AG04449 (cell line): ENCODE measurements at regions of chr2 and their contacts with region 1.

Region 1: DNA sequence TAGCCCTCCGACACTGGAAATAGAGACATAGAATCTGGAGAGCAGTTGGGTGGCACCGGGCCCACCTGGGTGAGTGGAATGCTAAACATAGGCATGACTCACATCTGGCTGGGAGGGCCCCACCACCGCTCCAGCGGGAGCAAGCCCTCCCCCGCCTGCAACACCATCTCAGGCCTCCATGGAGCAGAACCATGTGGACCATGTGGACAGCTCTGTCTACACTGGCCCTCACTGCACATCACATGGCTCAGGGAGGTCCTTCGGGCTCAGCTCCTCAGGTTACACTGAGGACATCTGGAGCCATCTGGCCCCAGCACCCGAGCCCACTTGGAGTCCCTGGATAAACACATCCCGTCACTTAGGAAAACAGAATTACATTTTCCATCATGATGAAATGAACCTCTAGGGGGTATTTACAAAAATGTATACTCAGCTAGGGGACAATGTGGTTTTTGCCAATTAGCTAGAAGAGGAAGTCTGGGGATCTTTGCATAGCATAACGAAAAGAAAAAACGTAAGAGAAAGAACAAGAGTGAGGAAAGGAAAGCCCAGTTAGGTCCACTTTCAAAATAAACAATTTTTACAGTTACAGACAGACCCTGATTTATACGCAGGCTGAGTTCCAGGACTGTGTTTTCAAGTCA is 30.7 kb upstream of the MLPH start:
- DNase-seq: peak; percentile 59
- H3K4me3 ChIP-seq: no peak overlapping the region
- CTCF ChIP-seq: no peak

Region 2: DNA sequence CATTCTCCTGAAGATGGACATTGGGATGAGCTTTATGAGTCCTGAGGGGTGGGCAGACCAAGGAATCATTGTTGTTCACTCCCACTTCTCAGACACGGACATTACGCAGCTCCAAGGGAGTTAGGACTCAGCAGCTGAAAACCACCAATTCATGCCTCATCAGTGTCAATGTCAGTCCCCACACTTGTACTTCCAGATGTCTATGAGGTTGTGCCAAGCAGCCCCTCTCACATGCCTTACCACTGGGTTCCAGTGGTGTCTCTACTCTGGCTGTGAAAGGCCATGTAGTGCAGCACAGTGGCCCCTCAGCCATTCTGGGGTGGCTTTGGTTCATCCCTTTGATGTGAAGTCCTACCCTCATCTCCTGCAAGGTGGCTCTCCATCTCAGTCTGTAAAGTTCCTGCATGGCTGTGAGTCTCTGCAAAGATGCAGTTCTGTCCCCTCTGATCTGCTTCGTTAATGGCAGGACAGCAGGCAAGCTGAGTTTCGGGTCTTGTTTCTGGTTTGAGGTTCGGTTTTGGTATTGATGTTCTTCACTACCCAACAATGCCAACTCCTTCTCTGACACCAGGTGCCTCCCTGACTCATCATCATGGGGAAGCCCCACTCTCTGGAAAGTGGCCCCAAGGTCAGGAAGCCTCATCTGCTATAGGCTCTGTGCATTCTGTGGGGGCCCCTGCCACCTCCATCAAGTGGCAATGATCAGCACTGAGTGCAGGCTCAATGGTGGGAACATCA is 28.4 kb before region 1 on chr2:
- CTCF ChIA-PET with region 1: interaction called, 115 read pairs
- POLR2A ChIA-PET with region 1: interaction called, 10 read pairs
- DNase-seq: no peak
- H3K4me3 ChIP-seq: no peak overlapping the region
- CTCF ChIP-seq: no peak

Region 3: GRCh38 chr2:237434866-237435311 is 21.4 kb before region 1 on chr2:
- CTCF ChIA-PET with region 1: interaction called, 64 read pairs
- POLR2A ChIA-PET with region 1: interaction called, 10 read pairs
- DNase-seq: peak; percentile 40
- H3K4me3 ChIP-seq: no peak overlapping the region
- CTCF ChIP-seq: no peak

Region 4: GRCh38 chr2:237441605-237442274 is 14.6 kb before region 1 on chr2:
- CTCF ChIA-PET with region 1: interaction called, 41 read pairs
- POLR2A ChIA-PET with region 1: interaction called, 5 read pairs
- DNase-seq: peak; percentile 38
- H3K4me3 ChIP-seq: no peak overlapping the region
- CTCF ChIP-seq: no peak

Region 5: DNA sequence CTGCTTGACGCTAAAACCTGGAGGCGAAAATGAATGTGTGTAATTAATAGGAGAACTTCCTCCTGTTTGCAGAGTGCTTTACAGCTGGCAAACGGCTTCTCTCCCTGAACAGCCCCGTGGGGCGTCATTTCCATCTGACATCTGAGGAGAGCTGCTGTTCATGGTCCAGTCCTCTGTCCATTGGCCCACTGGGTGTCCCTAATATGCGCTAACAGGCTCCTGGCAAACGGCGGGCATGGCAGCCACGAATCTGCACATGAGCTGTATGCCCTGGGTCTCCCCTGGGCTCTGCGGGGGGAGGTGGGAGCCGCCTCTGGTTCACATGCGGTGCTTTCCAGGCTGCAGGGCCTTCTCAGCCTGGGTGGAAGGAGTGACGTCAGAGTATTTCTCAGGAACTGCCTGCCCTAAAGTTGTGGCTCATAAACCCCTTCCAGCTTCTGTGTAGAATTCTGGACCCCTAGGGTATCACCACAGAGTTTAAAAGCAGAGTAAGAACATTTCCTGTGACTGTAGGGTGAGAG is 244.2 kb after region 1 on chr2:
- CTCF ChIA-PET with region 1: no interaction called
- POLR2A ChIA-PET with region 1: no interaction called
- DNase-seq: no peak
- H3K4me3 ChIP-seq: no peak overlapping the region
- CTCF ChIP-seq: no peak